Panc1 (cell line): ENCODE measurements at regions of chr15 and their contacts with region 1.

Region 1: DNA sequence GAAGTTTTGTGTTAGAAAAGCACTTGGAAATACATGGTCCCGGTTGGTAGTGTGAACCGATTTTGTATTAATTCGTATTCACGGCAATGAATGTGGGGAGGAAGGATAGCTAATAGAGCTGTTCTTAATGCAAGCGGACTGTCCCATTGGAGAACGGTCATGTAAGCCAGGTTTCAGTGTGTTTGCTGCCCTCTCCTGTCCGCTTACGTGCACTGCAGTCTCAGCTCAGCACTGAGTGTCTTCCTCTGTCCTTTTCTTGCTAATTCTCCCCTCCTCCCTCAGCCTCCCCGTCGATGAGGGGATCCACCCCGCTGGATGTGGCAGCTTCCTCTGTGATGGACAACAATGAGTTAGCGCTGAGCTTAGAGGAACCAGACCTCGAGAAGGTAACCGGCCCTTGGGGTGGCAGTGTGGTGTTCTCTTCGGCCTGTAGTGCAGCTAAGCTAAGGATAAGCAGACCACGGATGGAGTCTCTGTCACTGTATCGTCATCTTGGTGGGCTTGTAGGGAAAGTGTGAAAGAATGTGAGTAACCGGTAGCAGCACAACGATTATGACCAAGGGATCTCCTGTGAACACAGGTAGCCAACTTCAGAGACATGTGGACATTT is 267.5 kb upstream of the CHRM5 start:
- DNase-seq: peak; percentile 79
- ATAC-seq: peak; percentile 96
- H3K4me3 ChIP-seq: no peak overlapping the region
- H3K27ac ChIP-seq: no peak overlapping the region
- H3K4me1 ChIP-seq: no peaks in the 10 kb centered on the region
- H3K27me3 ChIP-seq: peaks cover 5% of the 10 kb centered on the region; the same call in 1 of the 2 replicates
- CTCF ChIP-seq: peak; percentile 91

Region 2: DNA sequence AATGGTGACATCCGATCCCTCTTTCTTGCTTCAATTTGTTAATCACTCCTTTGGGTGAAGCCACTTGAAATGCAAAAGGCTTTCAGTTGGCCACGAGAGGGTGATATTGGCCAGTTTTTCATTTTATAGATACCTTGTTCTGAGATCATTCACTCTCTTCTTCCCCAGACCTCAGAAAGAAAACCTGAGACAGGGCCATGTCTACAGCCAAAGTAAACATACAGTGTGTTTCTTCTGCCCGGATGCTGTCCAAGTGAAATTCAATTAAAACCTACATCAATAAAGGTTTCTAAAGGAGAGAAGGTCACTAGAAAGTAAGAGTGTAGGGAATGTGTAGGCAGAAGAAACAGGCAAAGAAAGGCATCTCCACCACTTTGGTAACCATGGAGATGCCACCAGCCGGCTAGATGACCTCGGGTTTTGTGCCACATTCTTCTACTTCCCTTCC is 466.8 kb before region 1 on chr15:
- CTCF ChIA-PET with region 1: interaction called, 4 read pairs
- POLR2A ChIA-PET with region 1: no interaction called
- in situ Hi-C with region 1: no loop called
- intact Hi-C with region 1: loop called (anchors 5 kb)
- DNase-seq: no peak
- ATAC-seq: peak; percentile 89
- H3K4me3 ChIP-seq: no peak overlapping the region
- H3K27ac ChIP-seq: no peak overlapping the region
- H3K4me1 ChIP-seq: no peaks in the 10 kb centered on the region
- H3K27me3 ChIP-seq: 0 out of 2 replicates have a peak, but pooled peaks cover 3% of the 10 kb centered on the region
- CTCF ChIP-seq: peak; percentile 69

Region 3: GRCh38 chr15:33243869-33244268 is 456.9 kb before region 1 on chr15:
- CTCF ChIA-PET with region 1: interaction called, 10 read pairs
- POLR2A ChIA-PET with region 1: no interaction called
- in situ Hi-C with region 1: no loop called
- intact Hi-C with region 1: no loop called
- DNase-seq: no peak
- ATAC-seq: peak; percentile 80; the same call in 1 of the 2 replicates
- H3K4me3 ChIP-seq: no peak overlapping the region
- H3K27ac ChIP-seq: no peak overlapping the region
- H3K4me1 ChIP-seq: no peaks in the 10 kb centered on the region
- H3K27me3 ChIP-seq: no peaks in the 10 kb centered on the region
- CTCF ChIP-seq: no peak

Region 4: DNA sequence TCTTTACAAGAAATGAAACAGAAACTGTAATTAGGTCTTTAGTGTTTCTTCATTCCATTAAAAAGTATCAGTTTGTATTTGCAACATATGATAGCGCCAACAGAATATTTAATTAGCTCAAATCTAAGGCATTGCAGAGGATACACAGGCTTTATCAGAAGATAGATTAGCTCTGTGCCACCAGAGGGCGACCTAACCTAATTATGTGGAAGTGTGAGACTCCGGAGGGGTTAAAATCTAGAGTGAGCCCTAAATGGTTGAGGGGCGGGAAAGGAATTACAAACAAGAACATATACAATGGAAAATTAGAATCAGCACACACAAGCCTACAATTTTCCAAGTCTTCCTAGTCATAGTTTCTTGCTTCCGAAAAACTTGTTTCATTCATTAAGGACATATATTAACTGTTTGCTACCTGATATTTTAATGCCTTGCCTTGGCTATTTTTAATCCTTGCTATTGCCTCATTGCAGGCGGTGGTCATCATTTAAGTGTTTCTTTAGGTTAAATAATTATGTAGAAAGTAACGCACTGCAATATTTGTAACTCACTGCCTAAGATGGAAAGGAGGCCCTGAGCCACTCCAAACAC is 408.0 kb before region 1 on chr15:
- CTCF ChIA-PET with region 1: interaction called, 44 read pairs
- POLR2A ChIA-PET with region 1: interaction called, 3 read pairs
- in situ Hi-C with region 1: no loop called
- intact Hi-C with region 1: loop called (anchors 1 kb)
- DNase-seq: peak; percentile 32
- ATAC-seq: peak; percentile 87
- H3K4me3 ChIP-seq: no peak overlapping the region
- H3K27ac ChIP-seq: no peak overlapping the region
- H3K4me1 ChIP-seq: peaks cover 3% of the 10 kb centered on the region; the same call in 1 of the 2 replicates
- H3K27me3 ChIP-seq: no peaks in the 10 kb centered on the region
- CTCF ChIP-seq: peak; percentile 77

Region 5: GRCh38 chr15:33298631-33299030 is 402.2 kb before region 1 on chr15:
- CTCF ChIA-PET with region 1: interaction called, 44 read pairs
- POLR2A ChIA-PET with region 1: interaction called, 10 read pairs
- in situ Hi-C with region 1: no loop called
- intact Hi-C with region 1: loop called (anchors 1 kb)
- DNase-seq: no peak
- ATAC-seq: no peak
- H3K4me3 ChIP-seq: no peak overlapping the region
- H3K27ac ChIP-seq: no peak overlapping the region
- H3K4me1 ChIP-seq: peaks cover 2% of the 10 kb centered on the region; the same call in 1 of the 2 replicates
- H3K27me3 ChIP-seq: no peaks in the 10 kb centered on the region; the same call in 1 of the 2 replicates
- CTCF ChIP-seq: no peak

Region 6: GRCh38 chr15:33526532-33526931 is 174.3 kb before region 1 on chr15:
- CTCF ChIA-PET with region 1: no interaction called
- POLR2A ChIA-PET with region 1: no interaction called
- in situ Hi-C with region 1: no loop called
- intact Hi-C with region 1: loop called (anchors 10 kb)
- DNase-seq: no peak
- ATAC-seq: no peak
- H3K4me3 ChIP-seq: no peak overlapping the region
- H3K27ac ChIP-seq: no peak overlapping the region
- H3K4me1 ChIP-seq: no peaks in the 10 kb centered on the region
- H3K27me3 ChIP-seq: peaks cover 2% of the 10 kb centered on the region; the same call in 1 of the 2 replicates
- CTCF ChIP-seq: no peak

Region 7: GRCh38 chr15:33612721-33613304 is 88.0 kb before region 1 on chr15:
- CTCF ChIA-PET with region 1: no interaction called
- POLR2A ChIA-PET with region 1: no interaction called
- in situ Hi-C with region 1: no loop called
- intact Hi-C with region 1: no loop called
- DNase-seq: no peak
- ATAC-seq: no peak
- H3K4me3 ChIP-seq: no peak overlapping the region
- H3K27ac ChIP-seq: no peak overlapping the region
- H3K4me1 ChIP-seq: no peaks in the 10 kb centered on the region
- H3K27me3 ChIP-seq: no peaks in the 10 kb centered on the region
- CTCF ChIP-seq: no peak

Region 8: DNA sequence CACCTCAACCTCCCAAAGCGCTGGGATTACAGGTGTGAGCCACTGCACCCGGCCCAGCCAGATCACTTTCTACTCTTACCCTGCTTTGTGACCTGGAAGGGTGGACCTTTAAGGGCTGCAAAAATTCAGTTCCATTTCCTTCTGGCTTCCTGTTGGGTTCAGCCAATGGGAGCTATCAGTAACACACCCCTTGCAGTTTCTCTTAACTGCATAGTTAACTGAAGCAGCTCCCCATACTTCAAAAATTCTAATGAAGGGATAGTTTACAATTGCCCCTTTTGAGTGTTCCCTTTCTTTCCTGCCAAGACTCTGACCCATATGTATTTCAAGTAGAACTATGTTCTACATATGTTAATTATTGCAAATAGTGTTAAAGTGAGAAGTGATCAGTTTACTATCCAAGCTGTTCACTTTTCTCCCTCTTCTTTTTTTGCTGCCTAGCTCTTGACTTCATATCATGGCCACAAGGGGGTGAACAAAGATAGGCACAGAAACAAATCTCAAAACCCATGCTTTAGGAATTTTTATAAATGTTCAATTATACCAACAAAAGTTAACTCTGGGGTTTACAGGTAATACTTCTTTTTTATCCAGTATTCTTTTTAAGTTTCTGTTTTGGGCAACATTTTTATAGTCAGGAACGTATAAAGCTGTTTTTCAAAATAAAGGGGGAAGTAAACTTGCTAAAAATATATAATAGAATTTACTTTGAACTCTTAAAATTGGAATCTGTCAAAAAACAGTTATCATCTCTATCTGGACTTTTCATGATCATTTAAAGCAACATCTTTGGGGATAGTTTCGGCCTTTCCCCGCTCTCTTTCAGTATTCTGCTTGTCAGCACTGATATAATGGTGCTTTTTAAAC is 409.2 kb after region 1 on chr15:
- CTCF ChIA-PET with region 1: no interaction called
- POLR2A ChIA-PET with region 1: no interaction called
- in situ Hi-C with region 1: no loop called
- intact Hi-C with region 1: no loop called
- DNase-seq: no peak
- ATAC-seq: peak; percentile 82
- H3K4me3 ChIP-seq: no peak overlapping the region
- H3K27ac ChIP-seq: no peak overlapping the region
- H3K4me1 ChIP-seq: no peaks in the 10 kb centered on the region
- H3K27me3 ChIP-seq: no peaks in the 10 kb centered on the region
- CTCF ChIP-seq: peak; percentile 79; the same call in 1 of the 2 replicates